Activated CD8-positive, alpha-beta T cell treated with anti-CD3 and anti-CD28 coated beads, Interleukin-2, amount 10 ng/mL, durations not matched to agents 7 days and 5 days (primary cell): ENCODE measurements at regions of chr1 and their contacts with region 1.

Region 1: DNA sequence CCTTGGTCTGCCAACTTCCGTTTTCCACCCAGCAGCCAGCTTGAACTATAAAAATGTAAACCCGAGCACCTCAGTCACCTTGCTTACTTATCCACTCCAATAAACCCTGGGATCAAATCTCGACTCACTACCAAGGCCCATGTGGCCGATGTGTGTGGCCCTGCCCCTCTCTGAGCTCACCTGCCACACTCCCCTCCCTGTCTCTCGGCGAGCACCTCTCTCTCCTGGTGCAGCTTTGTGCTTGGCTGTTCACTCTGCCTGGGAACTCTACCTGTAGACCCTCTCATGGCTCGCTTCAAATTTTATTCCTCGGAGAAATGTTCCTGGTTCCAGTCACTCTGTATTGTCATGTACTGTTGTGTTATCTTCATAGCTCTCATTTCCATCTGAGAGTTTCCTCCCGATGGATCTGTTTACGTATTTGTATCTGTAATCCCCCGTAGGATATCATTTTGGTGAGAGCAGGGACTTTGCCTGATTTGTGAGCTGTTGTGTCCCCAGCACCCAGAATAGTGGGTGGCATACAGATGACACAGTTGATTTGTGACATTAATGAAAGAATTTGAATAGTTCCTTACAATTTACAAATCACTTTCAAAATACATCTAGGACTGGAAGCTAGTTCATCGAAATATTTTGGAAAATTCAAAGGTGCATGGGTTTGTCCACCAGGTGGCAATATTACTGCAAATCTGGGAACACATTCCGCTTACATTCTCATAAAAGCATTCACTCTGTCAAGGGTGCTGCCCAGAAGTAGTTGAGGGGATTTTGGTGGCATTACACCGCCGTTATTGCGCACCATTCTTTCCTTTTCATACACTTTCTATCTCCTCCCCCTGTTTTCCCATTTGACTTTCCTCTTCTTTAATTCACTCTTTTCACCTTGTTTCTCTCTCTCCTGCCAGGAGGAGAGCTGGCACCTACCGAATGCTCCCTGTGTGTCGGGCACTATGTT is 95.3 kb downstream of the ABCA4 start:
- DNase-seq: no peak
- ATAC-seq: no peak
- H3K4me3 Mint-ChIP-seq: no peak overlapping the region
- H3K27ac Mint-ChIP-seq: no peak overlapping the region
- H3K4me1 Mint-ChIP-seq: no peaks in the 10 kb centered on the region
- H3K27me3 Mint-ChIP-seq: peaks cover 15% of the 10 kb centered on the region

Region 2: DNA sequence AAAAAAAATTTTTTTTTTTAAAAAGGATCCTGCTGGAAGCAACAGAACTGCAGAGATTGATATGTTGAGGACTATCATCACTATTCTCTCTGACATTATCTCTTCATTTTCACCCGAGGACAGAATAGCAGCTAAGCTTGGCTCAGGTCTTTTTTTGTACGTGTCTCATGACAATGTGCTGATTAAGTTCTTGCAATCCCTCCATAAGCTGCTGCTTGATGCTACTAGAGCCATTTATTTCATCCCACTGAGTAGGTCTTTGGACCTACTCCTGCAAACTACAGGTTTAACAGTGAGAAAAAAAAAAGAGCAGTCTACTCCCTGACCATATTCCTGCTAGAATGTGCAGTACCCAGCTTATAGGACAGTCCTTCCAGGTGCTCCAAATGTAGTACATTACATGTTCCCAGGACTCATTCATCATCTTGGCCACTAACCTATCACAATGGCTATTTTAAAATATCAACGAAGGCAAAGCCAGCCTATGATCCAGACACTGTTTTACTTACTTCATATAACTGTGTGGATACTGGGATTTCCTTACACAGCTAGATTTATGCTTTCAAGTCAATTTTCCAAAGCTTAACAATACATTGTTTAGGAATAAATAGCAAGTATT is 157.6 kb after region 1 on chr1:
- CTCF ChIA-PET with region 1: no interaction called
- POLR2A ChIA-PET with region 1: no interaction called
- DNase-seq: no peak
- ATAC-seq: no peak
- H3K4me3 Mint-ChIP-seq: no peak overlapping the region
- H3K27ac Mint-ChIP-seq: no peak overlapping the region
- H3K4me1 Mint-ChIP-seq: no peaks in the 10 kb centered on the region
- H3K27me3 Mint-ChIP-seq: peaks cover 25% of the 10 kb centered on the region

Region 3: GRCh38 chr1:94335950-94336349 is 310.3 kb after region 1 on chr1:
- CTCF ChIA-PET with region 1: interaction called, 20 read pairs
- POLR2A ChIA-PET with region 1: no interaction called
- DNase-seq: peak; percentile 50
- ATAC-seq: no peak
- H3K4me3 Mint-ChIP-seq: no peak overlapping the region
- H3K27ac Mint-ChIP-seq: no peak overlapping the region
- H3K4me1 Mint-ChIP-seq: no peaks in the 10 kb centered on the region
- H3K27me3 Mint-ChIP-seq: peaks cover 9% of the 10 kb centered on the region